ENCODE measurements at regions of chr18 and their contacts with region 1.

Region 1: DNA sequence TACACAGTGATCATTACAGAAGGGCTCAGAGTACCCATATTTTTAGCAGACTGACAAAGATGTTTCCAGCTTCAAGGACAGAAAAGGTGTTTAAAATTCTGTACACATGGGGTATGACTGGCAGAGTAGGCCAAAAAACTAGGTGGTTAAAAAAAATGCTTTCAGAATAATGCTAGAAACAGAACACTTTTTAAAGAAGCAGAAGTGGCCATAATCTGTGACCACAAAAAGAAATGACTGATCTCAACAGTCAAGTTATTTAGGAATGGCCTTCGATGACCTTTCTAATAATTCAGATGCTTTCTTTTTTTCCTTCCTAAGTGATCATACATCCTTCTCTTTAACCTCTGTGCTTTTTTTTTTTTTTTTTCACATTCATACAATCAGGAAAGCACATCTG is 4.1 kb upstream of the AQP4 start:
- DNase-seq: no peak
- ATAC-seq: no peak
- H3K4me3 ChIP-seq: no peak overlapping the region
- H3K27ac ChIP-seq: no peak overlapping the region
- H3K4me1 ChIP-seq: no peaks in the 10 kb centered on the region
- H3K27me3 ChIP-seq: no peaks in the 10 kb centered on the region
- CTCF ChIP-seq: no peak

Region 2: GRCh38 chr18:26685438-26686157 is 184.0 kb before region 1 on chr18:
- intact Hi-C with region 1: loop called in 1 of 3 experiments (anchors 10 kb)
- DNase-seq: no peak
- ATAC-seq: no peak
- H3K4me3 ChIP-seq: no peak overlapping the region
- H3K27ac ChIP-seq: no peak overlapping the region
- H3K4me1 ChIP-seq: no peaks in the 10 kb centered on the region
- H3K27me3 ChIP-seq: no peaks in the 10 kb centered on the region
- CTCF ChIP-seq: no peak

Measured in pancreas (tissue), 10 donors.